ENCODE measurements at regions of chr1 and their contacts with region 1.

Region 1: DNA sequence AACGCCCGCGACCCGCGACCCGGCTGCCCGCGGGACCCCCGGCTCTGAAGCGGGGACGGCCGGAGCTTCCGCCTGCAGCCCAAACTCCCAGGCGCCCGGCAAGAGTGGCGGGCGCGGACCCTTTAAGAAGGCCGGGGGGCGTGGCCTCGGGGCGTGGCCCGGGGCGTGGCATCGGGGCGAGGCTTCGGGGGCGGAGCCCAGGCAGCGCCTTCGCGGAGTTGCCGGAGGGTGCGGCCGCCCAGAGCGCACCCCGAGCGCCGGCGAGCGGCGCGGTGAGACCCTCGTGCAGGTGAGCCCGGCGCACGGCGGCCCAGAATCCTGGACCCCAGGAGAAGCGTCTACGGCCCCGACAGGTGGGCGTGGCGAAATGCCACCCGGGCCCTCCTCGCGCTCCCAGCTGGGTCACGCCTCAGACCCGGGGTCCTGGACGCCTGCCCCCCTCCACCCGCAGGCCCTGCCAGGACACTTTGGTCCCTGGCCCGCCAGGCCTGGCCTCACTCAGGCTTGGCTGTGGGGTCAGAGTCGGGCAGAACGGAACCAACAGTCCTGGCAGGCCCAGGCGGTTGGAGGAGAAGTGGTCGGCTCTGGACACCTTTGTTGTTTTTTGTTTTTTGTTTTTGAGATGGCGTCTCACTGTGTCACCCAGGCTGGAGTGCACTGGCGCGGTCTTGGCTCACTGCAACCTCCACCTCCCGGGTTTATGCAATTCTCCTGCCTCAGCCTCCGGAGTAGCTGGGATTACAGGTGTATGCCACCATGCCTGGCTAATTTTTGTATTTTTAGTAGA is 14.4 kb downstream of the RNF223 start:
- DNase-seq: peak; percentile 62 to 69 (median 69)
- H3K4me3 ChIP-seq: peak overlapping the region; percentile 21 to 74 (median 32)
- H3K4me3 Mint-ChIP-seq: peak overlapping the region; percentile 71 to 83
- H3K27ac ChIP-seq: no peak overlapping the region
- H3K27ac Mint-ChIP-seq: peak overlapping the region in 4 of 7 donors; percentile 37 to 68 (median 63)
- H3K4me1 ChIP-seq: peaks cover 26 to 34% of the 10 kb centered on the region in 2 donors
- H3K4me1 Mint-ChIP-seq: peaks cover 16% of the 10 kb centered on the region
- H3K27me3 ChIP-seq: peaks cover 6 to 61% of the 10 kb centered on the region in 2 donors
- H3K27me3 Mint-ChIP-seq: peaks cover 59 to 79% (median 69%) of the 10 kb centered on the region in 3 donors
- CTCF ChIP-seq: peak; percentile 5

Region 2: GRCh38 chr1:983799-984473 is 75.8 kb before region 1 on chr1:
- intact Hi-C with region 1: loop called (anchors 5 to 10 kb)
- DNase-seq: peak in 2 of 3 donors; percentile 29 to 50
- H3K4me3 ChIP-seq: no peak overlapping the region
- H3K4me3 Mint-ChIP-seq: no peak overlapping the region
- H3K27ac ChIP-seq: no peak overlapping the region
- H3K27ac Mint-ChIP-seq: peak overlapping the region in 1 of 7 donors; percentile 24
- H3K4me1 ChIP-seq: no peaks in the 10 kb centered on the region
- H3K4me1 Mint-ChIP-seq: no peaks in the 10 kb centered on the region
- H3K27me3 ChIP-seq: peaks cover 0 to 13% of the 10 kb centered on the region in 2 donors
- H3K27me3 Mint-ChIP-seq: peaks cover 37 to 59% (median 43%) of the 10 kb centered on the region in 3 donors
- CTCF ChIP-seq: peak; percentile 97

Region 3: GRCh38 chr1:1006305-1007159 is 53.2 kb before region 1 on chr1:
- intact Hi-C with region 1: no loop called
- DNase-seq: peak in 1 of 3 donors; percentile 32
- H3K4me3 ChIP-seq: no peak overlapping the region
- H3K4me3 Mint-ChIP-seq: no peak overlapping the region
- H3K27ac ChIP-seq: no peak overlapping the region
- H3K27ac Mint-ChIP-seq: peak overlapping the region in 2 of 7 donors; percentile 50 to 59
- H3K4me1 ChIP-seq: peaks cover 0 to 5% of the 10 kb centered on the region in 2 donors
- H3K4me1 Mint-ChIP-seq: peaks cover 14% of the 10 kb centered on the region
- H3K27me3 ChIP-seq: peaks cover 8 to 41% of the 10 kb centered on the region in 2 donors
- H3K27me3 Mint-ChIP-seq: peaks cover 48 to 80% (median 60%) of the 10 kb centered on the region in 3 donors
- CTCF ChIP-seq: no peak

Region 4: GRCh38 chr1:1019122-1019999 is 40.3 kb before region 1 on chr1:
- intact Hi-C with region 1: loop called in 1 of 2 experiments (anchors 5 kb)
- DNase-seq: peak; percentile 68 to 76 (median 72)
- H3K4me3 ChIP-seq: peak overlapping the region; percentile 30 to 61 (median 31)
- H3K4me3 Mint-ChIP-seq: peak overlapping the region; percentile 73 to 74
- H3K27ac ChIP-seq: no peak overlapping the region
- H3K27ac Mint-ChIP-seq: peak overlapping the region in 1 of 7 donors; percentile 19
- H3K4me1 ChIP-seq: peaks cover 14 to 31% of the 10 kb centered on the region in 2 donors
- H3K4me1 Mint-ChIP-seq: peaks cover 6% of the 10 kb centered on the region
- H3K27me3 ChIP-seq: peaks cover 7 to 36% of the 10 kb centered on the region in 2 donors
- H3K27me3 Mint-ChIP-seq: peaks cover 29 to 42% (median 40%) of the 10 kb centered on the region in 3 donors
- CTCF ChIP-seq: peak; percentile 36

Region 5: GRCh38 chr1:1387098-1388077 is 327.7 kb after region 1 on chr1:
- intact Hi-C with region 1: no loop called
- DNase-seq: no peak
- H3K4me3 ChIP-seq: no peak overlapping the region
- H3K4me3 Mint-ChIP-seq: no peak overlapping the region
- H3K27ac ChIP-seq: no peak overlapping the region
- H3K27ac Mint-ChIP-seq: peak overlapping the region in 2 of 7 donors; percentile 15 to 72
- H3K4me1 ChIP-seq: peaks cover 0 to 6% of the 10 kb centered on the region in 2 donors
- H3K4me1 Mint-ChIP-seq: peaks cover 6% of the 10 kb centered on the region
- H3K27me3 ChIP-seq: no peaks in the 10 kb centered on the region
- H3K27me3 Mint-ChIP-seq: peaks cover 0 to 3% (median 0%) of the 10 kb centered on the region in 3 donors
- CTCF ChIP-seq: no peak

Region 6: DNA sequence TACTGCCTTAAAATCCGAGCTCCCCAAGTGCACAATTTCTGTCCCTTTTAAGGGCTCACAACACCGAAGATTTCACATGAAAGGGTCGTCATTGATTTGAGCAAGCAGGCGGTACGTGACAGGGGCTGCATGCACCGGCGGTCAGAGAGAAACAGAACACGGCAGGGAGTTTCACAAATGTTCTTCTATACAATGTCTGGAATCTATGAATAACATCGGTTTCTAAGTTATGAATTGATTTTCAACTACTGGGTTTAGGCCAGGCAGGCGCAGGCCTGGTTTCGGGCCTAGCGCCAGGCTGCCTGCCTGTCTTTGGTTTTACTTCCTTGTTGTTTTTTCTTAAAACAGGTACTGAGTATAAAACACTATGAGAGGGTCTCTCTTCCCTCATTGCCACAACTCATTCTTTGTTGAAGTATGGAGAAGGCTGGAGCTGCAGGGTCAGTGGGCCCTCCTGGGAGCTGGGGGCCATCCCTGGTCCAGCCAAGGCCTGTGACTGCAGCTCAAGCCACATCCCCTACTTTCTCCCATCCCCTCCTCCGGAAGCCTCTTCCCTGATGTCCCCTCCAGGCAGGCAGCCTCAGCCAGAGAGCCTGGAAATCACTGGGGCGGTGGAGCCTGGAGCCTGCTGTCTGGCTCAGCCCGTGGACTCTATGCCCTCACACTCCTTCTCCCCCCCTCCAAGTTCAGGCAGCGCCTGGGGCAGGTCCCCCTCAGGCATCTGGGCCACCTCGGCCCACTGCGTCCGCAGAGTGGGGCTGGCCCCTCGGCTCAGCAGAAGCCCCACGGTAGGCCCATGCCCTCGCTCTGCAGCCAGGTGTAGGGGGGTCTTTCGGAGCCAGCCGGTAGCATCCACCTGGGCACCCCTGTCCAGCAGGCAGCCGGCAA is 359.0 kb after region 1 on chr1:
- intact Hi-C with region 1: no loop called
- DNase-seq: no peak
- H3K4me3 ChIP-seq: no peak overlapping the region
- H3K4me3 Mint-ChIP-seq: no peak overlapping the region
- H3K27ac ChIP-seq: no peak overlapping the region
- H3K27ac Mint-ChIP-seq: no peak overlapping the region
- H3K4me1 ChIP-seq: no peaks in the 10 kb centered on the region
- H3K4me1 Mint-ChIP-seq: no peaks in the 10 kb centered on the region
- H3K27me3 ChIP-seq: peaks cover 2 to 18% of the 10 kb centered on the region in 2 donors
- H3K27me3 Mint-ChIP-seq: peaks cover 16 to 37% (median 24%) of the 10 kb centered on the region in 3 donors
- CTCF ChIP-seq: no peak